Lower leg skin (tissue), 4 donors: ENCODE measurements at regions of chr13 and their contacts with region 1.

Region 1: DNA sequence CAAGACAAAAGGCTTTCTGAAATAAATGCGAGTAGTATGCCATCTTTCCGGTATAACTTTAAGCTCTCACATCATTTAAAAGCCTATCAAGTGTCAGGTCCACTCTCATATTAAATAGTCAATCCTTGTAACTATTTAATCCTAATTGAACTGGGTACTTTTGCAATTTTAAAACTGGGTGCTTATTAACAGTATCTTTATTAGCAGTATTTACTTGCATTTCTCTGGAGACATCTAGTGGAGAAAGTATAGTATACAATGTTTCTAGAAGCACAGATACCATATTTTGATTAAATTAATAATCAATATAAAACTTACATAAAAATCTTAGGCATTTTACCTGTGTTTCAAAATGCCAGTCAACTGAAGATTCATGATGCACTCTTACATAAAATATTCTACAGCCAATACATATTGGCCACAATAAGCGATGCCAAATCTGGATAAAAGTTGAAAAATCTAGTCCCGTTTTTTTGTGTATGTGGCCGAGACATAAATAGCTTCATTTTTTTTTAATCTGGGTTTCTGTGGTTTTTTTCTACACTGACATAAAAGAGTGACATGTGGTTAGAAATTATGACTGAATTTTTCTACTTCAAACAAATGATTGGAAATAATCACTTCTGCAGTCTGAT is 4.3 kb upstream of the POSTN start:
- DNase-seq: no peak
- H3K4me3 ChIP-seq: no peak overlapping the region
- CTCF ChIP-seq: no peak
- POLR2A ChIP-seq: no peak

Region 2: DNA sequence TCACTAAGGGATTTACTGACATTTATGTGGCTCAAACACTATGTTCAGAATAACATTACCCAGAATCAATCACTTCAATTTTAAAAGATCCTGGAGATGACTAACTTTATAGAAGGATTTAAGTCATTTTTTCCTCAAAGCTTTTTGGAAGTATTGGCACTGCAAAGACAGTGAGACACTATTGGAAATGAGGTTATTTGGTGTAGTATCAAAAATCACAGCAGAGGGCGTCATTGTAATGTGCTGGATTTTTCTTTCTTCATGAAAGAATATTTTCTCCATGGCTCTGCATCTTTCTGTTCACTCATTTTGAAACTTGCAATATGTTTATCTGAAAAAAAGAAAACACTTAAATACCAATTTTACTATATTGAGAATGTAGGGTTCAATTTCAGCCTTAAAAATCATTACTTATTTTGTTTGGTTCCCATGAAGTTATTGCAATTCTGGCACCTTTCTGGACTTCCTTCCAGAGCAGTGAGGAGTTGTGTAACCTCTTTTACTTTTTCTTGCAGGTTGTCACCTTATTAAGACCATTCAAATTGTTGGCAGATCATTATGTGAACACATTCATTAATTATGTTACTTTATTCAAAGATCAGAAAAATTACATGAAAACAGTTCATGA is 493.7 kb before region 1 on chr13:
- intact Hi-C with region 1: loop called (anchors 10 kb)
- DNase-seq: peak in 1 of 2 donors; percentile 24
- H3K4me3 ChIP-seq: no peak overlapping the region
- CTCF ChIP-seq: no peak
- POLR2A ChIP-seq: no peak